Activated CD4-positive, alpha-beta T cell treated with anti-CD3 and anti-CD28 coated beads for 36 hours (primary cell): ENCODE measurements at regions of chr18 and their contacts with region 1.

Region 1: DNA sequence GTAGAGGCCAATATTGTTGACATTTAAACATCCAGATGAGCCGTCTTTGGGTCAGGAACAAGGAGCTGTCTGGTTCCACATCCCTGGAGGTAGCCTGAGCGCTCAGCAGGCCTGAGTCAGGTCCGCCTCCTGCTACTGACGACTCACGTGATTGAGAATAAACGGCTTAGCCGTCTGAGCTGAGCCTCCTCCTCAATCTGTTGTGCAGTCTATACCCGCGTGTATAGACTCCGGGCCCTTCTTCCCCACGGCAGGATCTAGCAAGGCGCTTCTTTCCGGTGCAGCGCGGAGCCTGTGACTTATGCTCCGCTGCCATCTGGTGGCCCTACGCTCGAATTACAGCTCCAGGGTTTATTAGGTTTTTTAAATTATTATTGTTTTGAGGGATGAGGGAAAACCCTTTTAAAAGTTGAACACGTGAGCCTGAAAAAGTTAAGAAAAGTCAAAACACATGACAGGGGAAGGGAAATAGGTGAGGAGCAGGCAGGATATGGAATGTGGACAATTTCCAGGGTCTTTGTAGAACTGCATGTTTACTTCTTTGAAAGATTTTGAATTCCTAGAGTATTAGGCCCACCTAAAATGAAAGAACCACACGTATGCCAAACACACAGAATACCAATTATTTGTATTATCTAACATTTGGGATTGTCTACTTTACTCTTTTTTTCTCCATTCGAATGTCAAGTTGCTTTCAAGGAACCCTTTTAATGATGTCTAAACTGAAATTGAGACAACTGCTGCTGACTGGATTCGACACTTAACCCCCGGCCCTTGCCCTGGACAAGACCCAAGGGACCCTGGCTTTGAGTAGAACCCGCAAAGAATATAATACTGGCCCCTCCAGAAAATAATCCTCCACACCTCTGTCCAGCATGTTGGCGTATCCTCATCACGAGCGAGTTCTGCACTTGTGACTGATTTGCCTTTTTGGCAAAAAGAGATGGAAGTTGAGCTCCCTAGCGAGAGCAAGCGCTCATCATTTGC is 112.4 kb upstream of the ZNF236 start:
- DNase-seq: peak; percentile 78
- ATAC-seq: peak; percentile 95
- H3K4me3 Mint-ChIP-seq: no peak overlapping the region
- H3K27ac Mint-ChIP-seq: no peak overlapping the region
- H3K4me1 Mint-ChIP-seq: peaks cover 4% of the 10 kb centered on the region
- H3K27me3 Mint-ChIP-seq: no peaks in the 10 kb centered on the region

Region 2: GRCh38 chr18:76234291-76235060 is 475.5 kb before region 1 on chr18:
- CTCF ChIA-PET with region 1: no interaction called
- POLR2A ChIA-PET with region 1: no interaction called
- intact Hi-C with region 1: no loop called
- DNase-seq: no peak
- ATAC-seq: no peak
- H3K4me3 Mint-ChIP-seq: no peak overlapping the region
- H3K27ac Mint-ChIP-seq: no peak overlapping the region
- H3K4me1 Mint-ChIP-seq: no peaks in the 10 kb centered on the region
- H3K27me3 Mint-ChIP-seq: peaks cover 15% of the 10 kb centered on the region

Region 3: GRCh38 chr18:76405681-76406356 is 304.1 kb before region 1 on chr18:
- CTCF ChIA-PET with region 1: interaction called, 65 read pairs
- POLR2A ChIA-PET with region 1: no interaction called
- intact Hi-C with region 1: loop called in 1 of 2 experiments (anchors 2 kb)
- DNase-seq: peak; percentile 72
- ATAC-seq: no peak
- H3K4me3 Mint-ChIP-seq: no peak overlapping the region
- H3K27ac Mint-ChIP-seq: no peak overlapping the region
- H3K4me1 Mint-ChIP-seq: peaks cover 11% of the 10 kb centered on the region
- H3K27me3 Mint-ChIP-seq: no peaks in the 10 kb centered on the region

Region 4: GRCh38 chr18:76410660-76411417 is 299.1 kb before region 1 on chr18:
- CTCF ChIA-PET with region 1: interaction called, 10 read pairs
- POLR2A ChIA-PET with region 1: no interaction called
- intact Hi-C with region 1: loop called in 1 of 2 experiments (anchors 2 kb)
- DNase-seq: peak; percentile 59
- ATAC-seq: peak; percentile 94
- H3K4me3 Mint-ChIP-seq: no peak overlapping the region
- H3K27ac Mint-ChIP-seq: no peak overlapping the region
- H3K4me1 Mint-ChIP-seq: peaks cover 20% of the 10 kb centered on the region
- H3K27me3 Mint-ChIP-seq: peaks cover 4% of the 10 kb centered on the region

Region 5: DNA sequence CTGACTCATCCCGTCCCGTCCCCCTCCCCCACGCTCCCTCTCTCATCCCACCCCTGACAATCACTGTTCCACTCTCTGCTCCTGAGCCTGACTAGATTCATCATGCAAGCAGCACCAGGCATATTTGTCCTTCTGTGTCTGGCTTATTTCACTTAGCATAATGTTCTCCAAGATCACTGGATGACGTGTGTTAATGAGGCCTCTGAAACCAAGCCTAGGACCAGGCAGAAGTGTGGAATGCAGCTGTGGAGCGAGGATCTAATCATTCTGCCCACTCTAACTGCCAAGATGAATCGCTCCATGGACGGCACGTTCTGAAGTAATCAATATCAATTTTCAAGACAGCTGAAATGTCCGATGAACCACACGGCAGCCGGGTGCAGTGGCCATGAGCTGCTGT is 10.0 kb before region 1 on chr18:
- CTCF ChIA-PET with region 1: interaction called, 15 read pairs
- POLR2A ChIA-PET with region 1: no interaction called
- intact Hi-C with region 1: no loop called
- DNase-seq: no peak
- ATAC-seq: no peak
- H3K4me3 Mint-ChIP-seq: no peak overlapping the region
- H3K27ac Mint-ChIP-seq: no peak overlapping the region
- H3K4me1 Mint-ChIP-seq: peaks cover 2% of the 10 kb centered on the region
- H3K27me3 Mint-ChIP-seq: peaks cover 28% of the 10 kb centered on the region

Region 6: GRCh38 chr18:76721207-76721996 is 11.4 kb after region 1 on chr18:
- CTCF ChIA-PET with region 1: interaction called, 16 read pairs
- POLR2A ChIA-PET with region 1: no interaction called
- intact Hi-C with region 1: no loop called
- DNase-seq: peak; percentile 71
- ATAC-seq: peak; percentile 90
- H3K4me3 Mint-ChIP-seq: peak overlapping the region; percentile 3
- H3K27ac Mint-ChIP-seq: peak overlapping the region; percentile 49
- H3K4me1 Mint-ChIP-seq: peaks cover 51% of the 10 kb centered on the region
- H3K27me3 Mint-ChIP-seq: peaks cover 3% of the 10 kb centered on the region

Region 7: GRCh38 chr18:76765649-76766048 is 55.7 kb after region 1 on chr18:
- CTCF ChIA-PET with region 1: no interaction called
- POLR2A ChIA-PET with region 1: no interaction called
- intact Hi-C with region 1: no loop called
- DNase-seq: no peak
- ATAC-seq: no peak
- H3K4me3 Mint-ChIP-seq: no peak overlapping the region
- H3K27ac Mint-ChIP-seq: no peak overlapping the region
- H3K4me1 Mint-ChIP-seq: peaks cover 13% of the 10 kb centered on the region
- H3K27me3 Mint-ChIP-seq: no peaks in the 10 kb centered on the region